Thyroid gland (tissue), 4 donors: ENCODE measurements at regions of chr10 and their contacts with region 1.

Region 1: GRCh38 chr10:110746254-110746826 is 102.2 kb downstream of the RBM20 start:
- DNase-seq: peak; percentile 72 to 75
- H3K4me3 ChIP-seq: no peak overlapping the region
- H3K27ac ChIP-seq: no peak overlapping the region
- H3K4me1 ChIP-seq: peaks cover 0 to 12% of the 10 kb centered on the region in 2 donors
- H3K27me3 ChIP-seq: no peaks in the 10 kb centered on the region
- CTCF ChIP-seq: peak; percentile 63 to 88 (median 77)
- POLR2A ChIP-seq: no peak

Region 2: DNA sequence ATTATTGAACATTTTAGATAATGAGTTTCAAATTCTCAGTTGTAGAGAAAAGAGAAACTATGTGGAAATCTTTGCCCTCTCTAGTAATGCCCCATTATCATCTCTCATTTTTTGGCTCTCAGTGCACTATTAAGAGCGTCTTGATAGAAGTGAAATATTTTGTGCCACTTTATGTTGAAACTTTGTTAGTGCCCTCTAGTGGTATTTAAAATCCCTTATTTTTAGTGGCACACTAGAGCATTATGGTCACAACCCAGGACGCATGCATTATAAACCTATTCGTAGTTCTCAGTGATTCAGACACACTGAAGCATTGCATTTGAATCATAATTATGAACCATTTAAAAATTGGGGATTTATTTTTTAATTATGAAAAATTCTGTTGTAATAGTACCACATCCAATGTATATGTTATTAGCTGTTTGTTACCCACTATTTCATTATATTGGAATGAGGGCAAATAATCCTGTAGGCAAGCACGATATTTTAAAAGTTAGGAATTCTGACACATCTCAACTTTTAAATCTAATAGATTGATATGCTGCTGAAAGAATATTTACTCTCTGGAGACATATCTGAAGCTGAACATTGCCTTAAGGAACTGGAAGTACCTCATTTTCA is 147.3 kb after region 1 on chr10:
- intact Hi-C with region 1: loop called (anchors 5 kb)
- DNase-seq: no peak
- H3K4me3 ChIP-seq: no peak overlapping the region
- H3K27ac ChIP-seq: peak overlapping the region; percentile 30 to 43 (median 39)
- H3K4me1 ChIP-seq: peaks cover 0 to 9% of the 10 kb centered on the region in 2 donors
- H3K27me3 ChIP-seq: no peaks in the 10 kb centered on the region
- CTCF ChIP-seq: peak; percentile 23 to 69 (median 60)
- POLR2A ChIP-seq: no peak

Region 3: GRCh38 chr10:111076191-111076681 is 329.9 kb after region 1 on chr10:
- intact Hi-C with region 1: loop called (anchors 5 kb)
- DNase-seq: peak; percentile 60 to 61
- H3K4me3 ChIP-seq: peak overlapping the region in 2 of 3 donors; percentile 29 to 49
- H3K27ac ChIP-seq: peak overlapping the region in 1 of 3 donors; percentile 18
- H3K4me1 ChIP-seq: peaks cover 22 to 26% of the 10 kb centered on the region in 2 donors
- H3K27me3 ChIP-seq: no peaks in the 10 kb centered on the region
- CTCF ChIP-seq: peak; percentile 36 to 81 (median 53)
- POLR2A ChIP-seq: no peak